Caco-2 (cell line): ENCODE measurements at regions of chr1 and their contacts with region 1.

Region 1: GRCh38 chr1:225772323-225772768 is 5.3 kb upstream of the SRP9 start:
- DNase-seq: peak; percentile 94
- H3K4me3 ChIP-seq: no peak overlapping the region
- H3K4me3 Mint-ChIP-seq: no peak overlapping the region
- H3K27ac Mint-ChIP-seq: peak overlapping the region; percentile 48
- H3K4me1 ChIP-seq: peaks cover 51% of the 10 kb centered on the region
- H3K4me1 Mint-ChIP-seq: peaks cover 42% of the 10 kb centered on the region
- H3K27me3 ChIP-seq: no peaks in the 10 kb centered on the region
- H3K27me3 Mint-ChIP-seq: no peaks in the 10 kb centered on the region
- CTCF ChIP-seq: peak; percentile 87 to 89

Region 2: DNA sequence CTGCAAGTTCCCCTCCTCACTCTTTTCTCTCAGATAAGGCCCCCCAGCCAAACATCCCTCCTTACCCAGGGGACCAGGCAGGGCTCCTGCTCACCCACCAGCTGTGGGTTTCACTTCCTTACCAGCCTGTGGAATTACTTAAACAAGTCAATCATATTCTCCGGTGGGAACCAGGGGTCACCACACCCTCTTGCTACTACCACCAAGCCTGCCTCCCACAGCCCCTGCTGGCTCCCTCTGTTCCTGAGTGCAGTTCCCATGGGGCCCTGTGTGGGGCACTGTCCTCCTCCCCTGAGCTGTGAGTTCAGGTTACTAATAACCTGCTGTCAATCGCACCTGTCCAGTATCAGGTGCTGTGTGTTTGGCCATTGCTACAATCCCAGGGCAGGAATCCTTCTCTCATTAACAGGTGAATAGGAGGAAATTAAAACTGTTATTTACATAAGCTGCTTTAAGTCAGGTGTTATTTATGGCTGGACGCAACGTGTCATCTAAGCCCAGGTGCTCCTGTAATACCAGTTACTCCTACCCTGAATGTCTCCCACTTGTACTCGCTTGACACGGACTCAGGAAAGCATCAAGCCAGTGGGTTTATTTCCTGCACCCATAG is 291.4 kb before region 1 on chr1:
- CTCF ChIA-PET with region 1: interaction called, 10 read pairs
- POLR2A ChIA-PET with region 1: no interaction called
- intact Hi-C with region 1: loop called (anchors 1 kb)
- DNase-seq: peak; percentile 69 to 76
- H3K4me3 ChIP-seq: no peak overlapping the region
- H3K4me3 Mint-ChIP-seq: no peak overlapping the region
- H3K27ac Mint-ChIP-seq: peak overlapping the region; percentile 24
- H3K4me1 ChIP-seq: no peaks in the 10 kb centered on the region
- H3K4me1 Mint-ChIP-seq: peaks cover 8% of the 10 kb centered on the region
- H3K27me3 ChIP-seq: no peaks in the 10 kb centered on the region
- H3K27me3 Mint-ChIP-seq: no peaks in the 10 kb centered on the region
- CTCF ChIP-seq: peak; percentile 75 to 87

Region 3: DNA sequence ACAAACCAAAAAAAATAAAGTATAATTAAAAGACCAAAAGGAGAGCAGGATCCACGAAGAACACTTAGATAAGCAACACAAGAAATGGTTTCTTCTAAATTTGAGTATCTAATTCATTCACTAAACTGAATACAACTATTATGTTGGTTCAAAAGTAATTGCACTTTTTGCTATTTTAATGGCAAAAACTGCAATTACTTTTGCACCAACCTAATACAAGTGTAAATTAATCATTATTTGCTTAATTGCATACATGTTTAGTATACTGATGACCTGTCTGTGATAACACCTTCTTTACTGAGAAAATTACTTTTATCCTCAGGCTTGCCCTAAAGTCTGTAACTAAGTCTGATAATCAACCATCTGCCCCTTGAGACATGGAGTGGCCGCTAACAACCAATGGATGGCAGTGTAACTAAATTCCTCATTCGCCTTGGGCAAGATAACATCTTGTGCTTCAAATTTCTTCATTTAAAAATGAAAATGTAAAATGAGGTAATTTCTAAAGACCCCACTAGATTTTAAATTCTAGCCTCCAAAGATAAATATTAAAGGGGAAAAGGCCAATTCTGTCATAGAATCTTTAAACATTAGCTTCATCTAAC is 204.7 kb before region 1 on chr1:
- CTCF ChIA-PET with region 1: no interaction called
- POLR2A ChIA-PET with region 1: no interaction called
- intact Hi-C with region 1: loop called (anchors 1 kb)
- DNase-seq: peak in 1 of 2 experiments; percentile 9
- H3K4me3 ChIP-seq: no peak overlapping the region
- H3K4me3 Mint-ChIP-seq: no peak overlapping the region
- H3K27ac Mint-ChIP-seq: no peak overlapping the region
- H3K4me1 ChIP-seq: no peaks in the 10 kb centered on the region
- H3K4me1 Mint-ChIP-seq: peaks cover 6% of the 10 kb centered on the region
- H3K27me3 ChIP-seq: no peaks in the 10 kb centered on the region
- H3K27me3 Mint-ChIP-seq: no peaks in the 10 kb centered on the region
- CTCF ChIP-seq: peak in 1 of 2 experiments; percentile 26

Region 4: DNA sequence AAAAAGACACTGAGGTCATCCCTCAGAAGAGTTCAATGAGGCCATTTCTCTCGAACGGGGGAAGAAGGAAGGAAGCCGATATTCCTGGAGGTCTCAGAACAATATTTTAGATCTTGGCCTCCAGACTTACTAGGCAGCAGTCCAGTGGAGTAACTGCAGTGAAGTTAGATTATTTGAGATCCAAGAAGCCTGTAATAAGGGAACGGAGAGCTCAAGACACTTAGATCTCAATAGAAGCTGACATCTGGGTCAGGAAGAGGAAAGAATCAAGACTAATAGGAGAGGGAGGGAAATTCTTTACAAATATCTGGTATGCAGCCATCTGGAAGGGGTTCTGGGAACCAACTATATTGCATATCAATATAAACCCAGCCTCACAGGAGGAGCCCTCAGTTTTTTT is 105.9 kb before region 1 on chr1:
- CTCF ChIA-PET with region 1: interaction called, 3 read pairs
- POLR2A ChIA-PET with region 1: interaction called, 3 read pairs
- intact Hi-C with region 1: loop called (anchors 5 kb)
- DNase-seq: no peak
- H3K4me3 ChIP-seq: no peak overlapping the region
- H3K4me3 Mint-ChIP-seq: no peak overlapping the region
- H3K27ac Mint-ChIP-seq: no peak overlapping the region
- H3K4me1 ChIP-seq: peaks cover 12% of the 10 kb centered on the region
- H3K4me1 Mint-ChIP-seq: peaks cover 8% of the 10 kb centered on the region
- H3K27me3 ChIP-seq: no peaks in the 10 kb centered on the region
- H3K27me3 Mint-ChIP-seq: no peaks in the 10 kb centered on the region
- CTCF ChIP-seq: no peak

Region 5: GRCh38 chr1:225735252-225736149 is 36.8 kb before region 1 on chr1:
- CTCF ChIA-PET with region 1: interaction called, 7 read pairs
- POLR2A ChIA-PET with region 1: no interaction called
- intact Hi-C with region 1: loop called (anchors 5 kb)
- DNase-seq: no peak
- H3K4me3 ChIP-seq: no peak overlapping the region
- H3K4me3 Mint-ChIP-seq: no peak overlapping the region
- H3K27ac Mint-ChIP-seq: no peak overlapping the region
- H3K4me1 ChIP-seq: no peaks in the 10 kb centered on the region
- H3K4me1 Mint-ChIP-seq: peaks cover 11% of the 10 kb centered on the region
- H3K27me3 ChIP-seq: no peaks in the 10 kb centered on the region
- H3K27me3 Mint-ChIP-seq: no peaks in the 10 kb centered on the region
- CTCF ChIP-seq: no peak

Region 6: DNA sequence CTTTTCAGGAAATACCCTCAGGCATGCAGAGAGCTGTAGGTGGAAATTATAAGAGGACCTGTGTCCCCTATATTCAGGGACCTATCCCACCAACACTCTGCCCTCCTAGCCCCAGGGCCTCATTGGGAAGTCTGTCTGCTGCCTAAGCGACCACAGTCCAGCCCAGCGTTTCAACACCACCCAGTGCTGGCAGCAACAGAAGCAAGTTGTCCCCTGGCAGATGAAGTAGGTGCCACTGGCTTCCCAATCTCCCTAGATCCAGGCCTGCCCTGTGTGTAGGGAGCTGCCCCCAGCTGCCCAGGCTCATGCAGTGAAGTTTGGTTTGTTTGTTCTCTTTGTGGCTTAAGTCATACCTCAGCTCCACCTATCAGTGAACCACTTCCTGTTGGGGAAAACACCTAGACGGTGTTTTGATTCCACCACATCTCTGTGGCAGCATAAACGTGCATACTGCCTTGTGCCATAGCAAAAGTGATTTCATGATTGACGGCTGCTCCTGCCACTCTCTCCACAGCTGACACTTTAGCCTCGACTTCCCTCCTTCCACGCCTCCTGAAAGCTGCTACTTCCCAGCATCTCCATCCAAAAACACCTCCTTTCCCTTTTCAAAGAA is 124.7 kb after region 1 on chr1:
- CTCF ChIA-PET with region 1: no interaction called
- POLR2A ChIA-PET with region 1: no interaction called
- intact Hi-C with region 1: no loop called
- DNase-seq: no peak
- H3K4me3 ChIP-seq: no peak overlapping the region
- H3K4me3 Mint-ChIP-seq: no peak overlapping the region
- H3K27ac Mint-ChIP-seq: peak overlapping the region; percentile 41
- H3K4me1 ChIP-seq: peaks cover 10% of the 10 kb centered on the region; the same call in 1 of the 2 replicates
- H3K4me1 Mint-ChIP-seq: peaks cover 17% of the 10 kb centered on the region
- H3K27me3 ChIP-seq: no peaks in the 10 kb centered on the region
- H3K27me3 Mint-ChIP-seq: no peaks in the 10 kb centered on the region
- CTCF ChIP-seq: no peak

Region 7: GRCh38 chr1:225950905-225951497 is 178.7 kb after region 1 on chr1:
- CTCF ChIA-PET with region 1: no interaction called
- POLR2A ChIA-PET with region 1: no interaction called
- intact Hi-C with region 1: no loop called
- DNase-seq: no peak
- H3K4me3 ChIP-seq: no peak overlapping the region
- H3K4me3 Mint-ChIP-seq: no peak overlapping the region
- H3K27ac Mint-ChIP-seq: no peak overlapping the region
- H3K4me1 ChIP-seq: no peaks in the 10 kb centered on the region
- H3K4me1 Mint-ChIP-seq: peaks cover 7% of the 10 kb centered on the region
- H3K27me3 ChIP-seq: no peaks in the 10 kb centered on the region
- H3K27me3 Mint-ChIP-seq: peaks cover 3% of the 10 kb centered on the region
- CTCF ChIP-seq: no peak

Region 8: GRCh38 chr1:225977937-225978748 is 205.8 kb after region 1 on chr1:
- CTCF ChIA-PET with region 1: no interaction called
- POLR2A ChIA-PET with region 1: no interaction called
- intact Hi-C with region 1: loop called (anchors 1 kb)
- DNase-seq: no peak
- H3K4me3 ChIP-seq: no peak overlapping the region
- H3K4me3 Mint-ChIP-seq: no peak overlapping the region
- H3K27ac Mint-ChIP-seq: no peak overlapping the region
- H3K4me1 ChIP-seq: no peaks in the 10 kb centered on the region
- H3K4me1 Mint-ChIP-seq: no peaks in the 10 kb centered on the region
- H3K27me3 ChIP-seq: no peaks in the 10 kb centered on the region
- H3K27me3 Mint-ChIP-seq: no peaks in the 10 kb centered on the region
- CTCF ChIP-seq: no peak